BJ (cell line): ENCODE measurements at regions of chr6 and their contacts with region 1.

Region 1: GRCh38 chr6:37691904-37692806 is 5.5 kb downstream of the MDGA1 start:
- DNase-seq: no peak
- H3K4me3 ChIP-seq: no peak overlapping the region
- H3K27me3 ChIP-seq: peaks cover 5% of the 10 kb centered on the region
- CTCF ChIP-seq: peak; percentile 98

Region 2: GRCh38 chr6:37324131-37325033 is 367.8 kb before region 1 on chr6:
- CTCF ChIA-PET with region 1: interaction called, 32 read pairs
- POLR2A ChIA-PET with region 1: no interaction called
- DNase-seq: no peak
- H3K4me3 ChIP-seq: no peak overlapping the region
- H3K27me3 ChIP-seq: no peaks in the 10 kb centered on the region
- CTCF ChIP-seq: no peak

Region 3: DNA sequence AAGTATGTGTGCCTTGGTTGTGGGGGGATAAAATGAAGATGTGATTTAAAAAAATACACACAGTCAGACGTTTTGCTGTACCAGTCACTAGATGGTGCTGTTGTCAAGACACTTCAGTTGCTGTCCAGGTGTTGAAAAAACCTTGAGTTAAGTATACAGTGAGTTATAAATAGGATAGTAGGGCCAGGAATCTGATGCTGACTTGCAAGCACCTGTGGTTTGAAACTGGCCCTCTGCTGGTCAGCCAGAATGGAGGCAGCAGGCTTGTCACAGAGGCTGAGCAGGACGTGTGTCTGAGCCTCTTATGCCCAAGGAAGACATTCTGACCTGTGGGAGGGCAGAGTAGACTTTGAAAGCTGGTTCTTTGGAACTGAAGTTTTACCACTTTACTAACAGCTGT is 310.6 kb before region 1 on chr6:
- CTCF ChIA-PET with region 1: interaction called, 12 read pairs
- POLR2A ChIA-PET with region 1: no interaction called
- DNase-seq: peak; percentile 4
- H3K4me3 ChIP-seq: no peak overlapping the region
- H3K27me3 ChIP-seq: no peaks in the 10 kb centered on the region
- CTCF ChIP-seq: peak; percentile 53

Region 4: DNA sequence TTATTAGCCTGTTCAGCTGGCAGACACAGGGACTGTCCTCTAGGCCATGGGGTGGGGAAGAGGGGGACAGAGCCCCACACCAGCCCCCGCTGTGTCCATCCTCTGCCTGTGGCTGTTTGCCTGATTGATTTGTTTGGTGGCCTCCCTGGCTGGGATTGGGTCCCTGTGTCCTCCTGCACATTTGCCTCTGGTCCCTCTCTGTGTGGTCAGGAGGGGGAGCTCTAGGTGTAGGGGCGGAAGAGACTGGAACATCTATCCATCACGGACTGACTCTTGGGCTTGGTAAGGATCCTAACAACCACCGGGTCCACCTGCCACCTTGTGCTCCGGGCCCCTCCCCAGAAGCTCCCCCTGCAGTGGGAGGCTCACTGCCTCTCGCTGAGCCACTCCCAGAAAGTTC is 154.0 kb before region 1 on chr6:
- CTCF ChIA-PET with region 1: interaction called, 23 read pairs
- POLR2A ChIA-PET with region 1: no interaction called
- DNase-seq: no peak
- H3K4me3 ChIP-seq: no peak overlapping the region
- H3K27me3 ChIP-seq: peaks cover 43% of the 10 kb centered on the region
- CTCF ChIP-seq: peak; percentile 47

Region 5: DNA sequence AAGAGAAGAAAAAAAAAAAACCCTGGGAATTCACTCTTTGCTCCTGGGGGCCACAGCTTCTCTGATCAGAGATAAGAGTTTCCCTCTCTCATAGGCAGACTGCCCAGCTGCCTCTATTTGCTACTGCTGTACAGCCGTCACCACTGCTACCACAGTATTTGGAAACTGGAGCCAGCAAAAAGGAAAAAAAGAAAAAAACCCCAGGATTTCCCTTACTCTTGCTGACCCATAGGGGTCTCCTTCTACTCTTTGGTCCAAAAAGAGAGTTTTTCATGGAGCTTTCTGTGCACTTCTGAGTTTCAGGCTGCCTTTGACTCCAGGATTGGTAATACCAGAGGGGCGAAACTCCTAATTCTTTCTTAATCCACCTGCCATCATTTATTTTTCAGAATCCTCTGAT is 84.2 kb before region 1 on chr6:
- CTCF ChIA-PET with region 1: interaction called, 14 read pairs
- POLR2A ChIA-PET with region 1: no interaction called
- DNase-seq: no peak
- H3K4me3 ChIP-seq: no peak overlapping the region
- H3K27me3 ChIP-seq: peaks cover 4% of the 10 kb centered on the region; the same call in 1 of the 2 replicates
- CTCF ChIP-seq: peak; percentile 55

Region 6: GRCh38 chr6:37705239-37706051 is 13.3 kb after region 1 on chr6:
- CTCF ChIA-PET with region 1: interaction called, 14 read pairs
- POLR2A ChIA-PET with region 1: no interaction called
- DNase-seq: no peak
- H3K4me3 ChIP-seq: peak overlapping the region; percentile 25
- H3K27me3 ChIP-seq: no peaks in the 10 kb centered on the region
- CTCF ChIP-seq: peak; percentile 78